Endothelial cell of umbilical vein (primary cell): ENCODE measurements at regions of chr16 and their contacts with region 1.

Region 1: GRCh38 chr16:29694384-29695195 is 15.6 kb downstream of the QPRT start:
- DNase-seq: no peak
- H3K4me3 ChIP-seq: no peak overlapping the region
- H3K27ac ChIP-seq: no peak overlapping the region
- H3K4me1 ChIP-seq: no peaks in the 10 kb centered on the region
- H3K27me3 ChIP-seq: peaks cover 0 to 1% of the 10 kb centered on the region in 2 experiments
- CTCF ChIP-seq: no peak
- POLR2A ChIP-seq: no peak

Region 2: GRCh38 chr16:29675811-29676643 is 18.6 kb before region 1 on chr16:
- CTCF ChIA-PET with region 1: interaction called, 10 read pairs
- POLR2A ChIA-PET with region 1: no interaction called
- dilution Hi-C with region 1: no loop called
- intact Hi-C with region 1: no loop called
- DNase-seq: peak; percentile 18
- H3K4me3 ChIP-seq: no peak overlapping the region
- H3K27ac ChIP-seq: no peak overlapping the region
- H3K4me1 ChIP-seq: no peaks in the 10 kb centered on the region
- H3K27me3 ChIP-seq: peaks cover 0 to 2% of the 10 kb centered on the region in 2 experiments
- CTCF ChIP-seq: no peak
- POLR2A ChIP-seq: no peak

Region 3: GRCh38 chr16:29720699-29721098 is 26.1 kb after region 1 on chr16:
- CTCF ChIA-PET with region 1: interaction called, 76 read pairs
- POLR2A ChIA-PET with region 1: no interaction called
- dilution Hi-C with region 1: no loop called
- intact Hi-C with region 1: loop called (anchors 2 kb)
- DNase-seq: no peak
- H3K4me3 ChIP-seq: no peak overlapping the region
- H3K27ac ChIP-seq: no peak overlapping the region
- H3K4me1 ChIP-seq: no peaks in the 10 kb centered on the region
- H3K27me3 ChIP-seq: no peaks in the 10 kb centered on the region
- CTCF ChIP-seq: no peak
- POLR2A ChIP-seq: no peak

Region 4: DNA sequence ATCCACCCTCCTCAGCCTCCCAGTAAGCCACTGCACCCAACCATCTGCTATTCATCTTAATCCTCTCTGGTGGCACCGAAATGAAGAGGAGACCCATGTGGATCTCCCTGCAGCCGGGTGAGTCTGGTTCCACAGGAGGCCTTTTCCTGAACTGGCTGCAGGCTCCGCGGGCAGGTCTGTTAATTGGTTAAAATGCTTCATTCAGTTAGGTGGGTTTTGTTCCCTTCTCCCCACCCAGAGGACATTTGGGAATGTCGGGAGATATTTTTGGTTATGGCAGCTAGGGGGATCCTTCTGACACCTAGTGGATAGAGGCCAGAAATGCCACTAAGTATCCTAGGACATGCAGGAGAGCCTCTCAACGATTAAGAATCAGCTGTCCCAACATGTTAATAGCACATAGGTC is 34.5 kb after region 1 on chr16:
- CTCF ChIA-PET with region 1: interaction called, 89 read pairs
- POLR2A ChIA-PET with region 1: no interaction called
- dilution Hi-C with region 1: no loop called
- intact Hi-C with region 1: loop called (anchors 1 kb)
- DNase-seq: peak; percentile 43
- H3K4me3 ChIP-seq: no peak overlapping the region
- H3K27ac ChIP-seq: no peak overlapping the region
- H3K4me1 ChIP-seq: no peaks in the 10 kb centered on the region
- H3K27me3 ChIP-seq: peaks cover 2 to 6% of the 10 kb centered on the region in 2 experiments
- CTCF ChIP-seq: peak; percentile 41 to 66
- POLR2A ChIP-seq: no peak

Region 5: GRCh38 chr16:30032083-30032819 is 337.7 kb after region 1 on chr16:
- CTCF ChIA-PET with region 1: interaction called, 79 read pairs
- POLR2A ChIA-PET with region 1: no interaction called
- dilution Hi-C with region 1: no loop called
- intact Hi-C with region 1: no loop called
- DNase-seq: peak; percentile 56
- H3K4me3 ChIP-seq: no peak overlapping the region
- H3K27ac ChIP-seq: no peak overlapping the region
- H3K4me1 ChIP-seq: no peaks in the 10 kb centered on the region
- H3K27me3 ChIP-seq: peaks cover 19 to 20% of the 10 kb centered on the region in 2 experiments
- CTCF ChIP-seq: peak; percentile 75 to 80
- POLR2A ChIP-seq: no peak

Region 6: GRCh38 chr16:30805370-30806169 is 1111.0 kb after region 1 on chr16:
- CTCF ChIA-PET with region 1: no interaction called
- POLR2A ChIA-PET with region 1: no interaction called
- dilution Hi-C with region 1: no loop called
- intact Hi-C with region 1: no loop called
- DNase-seq: peak; percentile 74
- H3K4me3 ChIP-seq: peak overlapping the region; percentile 18 to 57 (median 37)
- H3K27ac ChIP-seq: peak overlapping the region; percentile 18
- H3K4me1 ChIP-seq: peaks cover 8% of the 10 kb centered on the region
- H3K27me3 ChIP-seq: no peaks in the 10 kb centered on the region
- CTCF ChIP-seq: peak in 1 of 2 donors; percentile 3
- POLR2A ChIP-seq: peak; percentile 88